Heart left ventricle (tissue), 16 donors: ENCODE measurements at regions of chr7 and their contacts with region 1.

Region 1: DNA sequence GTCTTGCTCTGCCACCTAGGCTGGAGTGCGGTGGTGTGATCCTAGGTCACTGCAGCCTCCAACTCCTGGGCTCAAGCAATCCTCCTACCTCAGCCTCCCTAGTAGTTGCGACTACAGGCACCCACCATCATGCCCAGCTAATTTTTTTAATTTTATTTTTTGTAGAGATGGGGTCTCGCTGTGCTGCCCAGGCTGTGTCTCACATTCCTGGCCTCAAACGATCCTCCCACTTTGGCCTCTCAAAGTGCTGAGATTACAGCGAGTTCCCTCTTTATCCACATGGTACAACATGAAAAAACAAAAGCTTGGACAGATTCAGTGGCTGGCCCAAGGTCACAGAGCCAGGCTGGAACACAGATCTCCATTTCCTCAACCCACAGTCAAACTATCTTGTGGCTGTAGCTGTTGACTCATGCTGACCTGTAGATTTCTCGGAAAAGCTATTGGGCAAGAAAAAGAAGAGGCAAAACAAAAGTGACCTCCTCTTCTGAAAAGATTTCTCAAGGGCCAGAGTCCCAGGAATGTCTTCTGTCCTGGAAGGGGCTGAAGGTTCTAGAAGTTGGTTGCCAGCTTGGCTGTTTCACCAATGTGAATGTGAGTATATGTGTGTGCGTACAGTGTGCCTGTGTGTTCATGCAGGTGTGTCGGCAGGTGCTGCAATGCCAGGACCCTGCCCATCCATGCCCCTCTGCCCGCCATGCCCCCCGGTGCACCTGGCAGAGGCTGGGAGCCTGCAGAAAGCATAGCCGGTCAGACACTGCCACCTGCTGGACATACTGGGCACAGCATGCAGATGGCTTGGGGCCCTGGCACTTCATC is 28.4 kb downstream of the TMEM130 start:
- DNase-seq: peak; percentile 42 to 75 (median 51)
- ATAC-seq: peak; percentile 25 to 78 (median 76)
- H3K4me3 ChIP-seq: no peak overlapping the region
- H3K27ac ChIP-seq: no peak overlapping the region
- H3K4me1 ChIP-seq: peaks cover 0 to 4% (median 0%) of the 10 kb centered on the region in 12 donors
- H3K27me3 ChIP-seq: peaks cover 0 to 12% (median 0%) of the 10 kb centered on the region in 9 donors
- CTCF ChIP-seq: peak; percentile 89 to 99 (median 96)
- POLR2A ChIP-seq: no peak

Region 2: GRCh38 chr7:98280791-98281756 is 560.3 kb before region 1 on chr7 and contains the start of gene BRI3:
- intact Hi-C with region 1: loop called in 1 of 10 experiments (anchors 10 kb)
- DNase-seq: peak; percentile 91 to 96 (median 94)
- ATAC-seq: peak; percentile 71 to 81 (median 76)
- H3K4me3 ChIP-seq: peak within 1 kb of the TSS; percentile 65 to 98 (median 86)
- H3K27ac ChIP-seq: peak within 1 kb of the TSS; percentile 79 to 99 (median 96)
- H3K4me1 ChIP-seq: peaks cover 16 to 54% (median 39%) of the 10 kb centered on the region in 12 donors
- H3K27me3 ChIP-seq: no peaks in the 10 kb centered on the region
- CTCF ChIP-seq: peak in 7 of 12 donors; percentile 12 to 59 (median 43)
- POLR2A ChIP-seq: peak in 1 of 2 donors; percentile 93
- total RNA-seq, gene BRI3: 51.0 to 274 (median 223) TPM

Region 3: DNA sequence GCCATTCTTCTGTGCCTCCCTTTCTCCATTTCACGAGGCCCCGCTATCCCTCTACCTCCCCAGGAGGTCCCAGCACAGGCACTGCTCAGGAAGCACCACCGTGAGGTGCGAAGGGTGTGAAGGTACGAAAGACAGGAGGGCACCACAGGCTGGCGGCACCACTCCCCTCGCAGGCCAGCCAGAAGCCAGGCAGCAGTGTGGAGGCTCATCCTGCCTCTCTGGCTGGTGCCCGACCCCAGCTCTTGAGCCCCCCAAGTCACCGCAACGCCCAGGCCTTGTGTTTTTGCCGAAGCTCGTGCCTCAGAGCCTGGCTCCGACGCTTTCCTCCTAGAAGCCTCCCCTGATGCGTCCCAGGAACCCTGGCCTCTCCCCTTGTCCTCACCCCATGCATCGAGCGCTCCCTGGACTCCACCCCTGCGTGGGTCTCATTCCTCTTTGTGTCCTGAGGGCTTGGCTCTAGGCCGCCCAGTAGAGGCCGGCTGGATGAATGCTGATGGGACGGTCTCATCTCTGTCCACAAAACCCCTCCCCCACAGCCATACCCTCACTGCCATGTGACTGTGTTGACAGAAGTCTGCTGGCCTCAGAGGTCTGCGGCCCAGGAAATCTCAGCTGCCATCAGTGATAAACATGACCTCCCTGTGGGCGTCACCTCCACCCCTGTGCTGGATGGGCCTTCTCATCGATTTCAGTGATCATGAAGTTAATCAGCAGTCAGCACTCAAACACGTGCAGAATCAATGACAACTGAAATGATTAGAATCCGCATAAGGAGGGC is 540.6 kb before region 1 on chr7:
- intact Hi-C with region 1: loop called in 1 of 10 experiments (anchors 10 kb)
- DNase-seq: no peak
- ATAC-seq: no peak
- H3K4me3 ChIP-seq: no peak overlapping the region
- H3K27ac ChIP-seq: no peak overlapping the region
- H3K4me1 ChIP-seq: peaks cover 0 to under 1% (median 0%) of the 10 kb centered on the region in 12 donors
- H3K27me3 ChIP-seq: no peaks in the 10 kb centered on the region
- CTCF ChIP-seq: no peak
- POLR2A ChIP-seq: no peak

Region 4: GRCh38 chr7:98434095-98434494 is 407.3 kb before region 1 on chr7:
- intact Hi-C with region 1: loop called (anchors 1 to 2 kb)
- DNase-seq: no peak
- ATAC-seq: no peak
- H3K4me3 ChIP-seq: no peak overlapping the region
- H3K27ac ChIP-seq: no peak overlapping the region
- H3K4me1 ChIP-seq: no peaks in the 10 kb centered on the region
- H3K27me3 ChIP-seq: peaks cover 0 to 3% (median 0%) of the 10 kb centered on the region in 9 donors
- CTCF ChIP-seq: no peak
- POLR2A ChIP-seq: no peak

Region 5: DNA sequence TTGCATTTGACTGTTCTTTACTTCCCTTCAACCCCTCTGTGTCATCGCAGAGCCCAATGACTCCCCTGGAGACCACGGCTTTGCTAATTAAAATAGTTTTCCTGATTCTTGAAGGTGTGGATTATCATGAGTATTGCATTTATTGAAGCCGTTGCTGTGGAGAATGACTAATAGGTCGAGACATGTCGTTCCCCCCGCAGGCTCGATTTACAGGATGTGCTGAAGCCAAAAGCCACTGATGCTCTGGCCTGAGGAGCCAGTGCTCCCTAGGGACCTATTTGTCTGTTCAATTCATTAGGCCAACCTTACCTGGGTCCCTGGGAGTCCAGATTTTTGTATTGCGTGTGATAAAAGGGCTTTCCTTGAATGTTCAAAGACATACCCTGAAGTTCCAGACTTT is 122.0 kb before region 1 on chr7:
- intact Hi-C with region 1: no loop called
- DNase-seq: no peak
- ATAC-seq: no peak
- H3K4me3 ChIP-seq: no peak overlapping the region
- H3K27ac ChIP-seq: no peak overlapping the region
- H3K4me1 ChIP-seq: no peaks in the 10 kb centered on the region
- H3K27me3 ChIP-seq: peaks cover 0 to 11% (median 0%) of the 10 kb centered on the region in 9 donors
- CTCF ChIP-seq: no peak
- POLR2A ChIP-seq: no peak

Region 6: DNA sequence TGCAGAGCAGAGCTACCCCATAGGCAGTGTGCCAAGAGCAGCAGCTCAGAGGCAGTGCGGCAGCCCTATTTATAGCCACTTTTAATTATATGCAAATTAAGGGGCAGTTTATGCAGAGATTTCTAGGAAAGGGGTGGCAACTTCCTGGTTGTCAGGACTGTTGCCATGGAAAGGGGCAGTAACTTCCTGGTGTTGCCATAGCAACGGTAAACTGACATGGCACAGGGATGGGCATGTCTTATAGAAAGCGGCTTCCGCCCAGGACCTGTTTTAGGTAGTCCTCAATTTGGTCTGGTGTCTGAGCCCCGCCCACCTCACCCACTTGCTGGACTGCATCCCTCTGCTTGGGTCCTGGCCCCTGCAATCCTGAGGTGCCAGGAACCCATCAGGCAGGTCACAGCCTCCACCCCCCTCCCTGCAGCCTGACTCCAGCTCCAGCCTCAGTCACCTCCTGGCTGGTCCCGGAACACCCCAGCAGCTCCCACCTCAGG is 87.4 kb before region 1 on chr7:
- intact Hi-C with region 1: loop called (anchors 1 to 5 kb)
- DNase-seq: peak in 2 of 5 donors; percentile 30 to 34
- ATAC-seq: peak in 1 of 4 donors; percentile 19
- H3K4me3 ChIP-seq: no peak overlapping the region
- H3K27ac ChIP-seq: no peak overlapping the region
- H3K4me1 ChIP-seq: no peaks in the 10 kb centered on the region
- H3K27me3 ChIP-seq: peaks cover 0 to 6% (median 0%) of the 10 kb centered on the region in 9 donors
- CTCF ChIP-seq: no peak
- POLR2A ChIP-seq: no peak

Region 7: GRCh38 chr7:98779800-98780587 is 61.4 kb before region 1 on chr7:
- intact Hi-C with region 1: loop called in 3 of 10 experiments (anchors 5 kb)
- DNase-seq: no peak
- ATAC-seq: no peak
- H3K4me3 ChIP-seq: no peak overlapping the region
- H3K27ac ChIP-seq: no peak overlapping the region
- H3K4me1 ChIP-seq: peaks cover 0 to 3% (median 0%) of the 10 kb centered on the region in 12 donors
- H3K27me3 ChIP-seq: no peaks in the 10 kb centered on the region
- CTCF ChIP-seq: no peak
- POLR2A ChIP-seq: no peak

Region 8: DNA sequence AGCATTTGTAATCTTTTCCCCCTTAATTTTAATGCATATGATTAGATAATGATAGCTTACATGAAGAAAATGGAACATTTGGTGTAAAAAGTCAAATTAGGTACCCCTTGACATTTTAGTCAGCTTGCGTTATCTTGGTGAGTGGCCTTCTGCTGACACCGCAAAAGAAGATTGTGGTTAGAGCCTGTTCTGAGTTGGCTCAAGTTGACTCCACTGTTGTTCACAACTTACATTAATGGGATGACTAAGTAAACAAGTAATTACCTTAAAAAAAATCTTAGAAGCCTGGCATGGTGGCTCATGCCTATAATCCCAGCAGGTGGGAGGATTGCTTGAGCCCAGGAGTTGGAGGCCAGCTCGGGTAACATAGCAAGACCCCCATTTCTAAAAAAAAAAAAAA is 61.1 kb after region 1 on chr7:
- intact Hi-C with region 1: no loop called
- DNase-seq: no peak
- ATAC-seq: no peak
- H3K4me3 ChIP-seq: no peak overlapping the region
- H3K27ac ChIP-seq: no peak overlapping the region
- H3K4me1 ChIP-seq: peaks cover 0 to 10% (median 0%) of the 10 kb centered on the region in 12 donors
- H3K27me3 ChIP-seq: no peaks in the 10 kb centered on the region
- CTCF ChIP-seq: no peak
- POLR2A ChIP-seq: no peak

Region 9: GRCh38 chr7:99422186-99422585 is 580.8 kb after region 1 on chr7:
- intact Hi-C with region 1: no loop called
- DNase-seq: peak in 1 of 5 donors; percentile 17
- ATAC-seq: no peak
- H3K4me3 ChIP-seq: no peak overlapping the region
- H3K27ac ChIP-seq: no peak overlapping the region
- H3K4me1 ChIP-seq: no peaks in the 10 kb centered on the region
- H3K27me3 ChIP-seq: no peaks in the 10 kb centered on the region
- CTCF ChIP-seq: no peak
- POLR2A ChIP-seq: no peak